ENCODE measurements at regions of chr20 and their contacts with region 1.

Region 1: DNA sequence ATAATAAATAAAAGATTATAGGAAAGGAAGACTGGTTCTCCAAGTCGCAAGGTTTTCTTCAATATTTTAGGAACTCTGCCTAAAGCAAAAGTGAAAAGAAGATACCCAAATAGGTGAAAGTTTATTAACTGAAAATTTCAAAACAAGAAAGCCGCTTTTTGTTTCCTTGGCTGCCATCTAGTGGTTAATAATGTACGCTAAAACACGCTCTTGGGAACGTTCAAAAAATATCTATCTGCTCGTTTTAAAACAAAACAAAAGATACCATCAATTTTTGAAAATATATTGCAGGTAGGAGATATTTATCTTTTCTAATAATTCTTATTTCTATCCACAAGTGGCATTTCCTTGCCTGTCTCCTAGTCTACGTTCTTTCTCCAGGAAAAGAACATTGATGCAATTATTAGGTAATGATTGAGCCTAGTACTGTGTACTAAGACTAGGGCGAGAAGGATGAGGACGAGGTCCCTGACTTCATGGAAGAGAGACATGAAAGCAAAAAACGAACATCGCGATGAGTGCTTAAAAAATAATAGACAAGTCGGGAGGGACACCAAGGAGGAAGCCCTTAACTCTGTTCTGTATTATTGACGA is 97.2 kb downstream of the SPTLC3 start:
- DNase-seq: no peak
- ATAC-seq: peak; percentile 38 to 68 (median 55)
- H3K4me3 ChIP-seq: no peak overlapping the region
- H3K27ac ChIP-seq: no peak overlapping the region
- H3K4me1 ChIP-seq: no peaks in the 10 kb centered on the region
- H3K27me3 ChIP-seq: no peaks in the 10 kb centered on the region
- CTCF ChIP-seq: peak; percentile 38 to 69 (median 63)

Region 2: GRCh38 chr20:12924126-12924525 is 181.8 kb before region 1 on chr20:
- intact Hi-C with region 1: loop called in 1 of 3 experiments (anchors 5 kb)
- DNase-seq: no peak
- ATAC-seq: no peak
- H3K4me3 ChIP-seq: no peak overlapping the region
- H3K27ac ChIP-seq: no peak overlapping the region
- H3K4me1 ChIP-seq: no peaks in the 10 kb centered on the region
- H3K27me3 ChIP-seq: no peaks in the 10 kb centered on the region
- CTCF ChIP-seq: no peak

Region 3: DNA sequence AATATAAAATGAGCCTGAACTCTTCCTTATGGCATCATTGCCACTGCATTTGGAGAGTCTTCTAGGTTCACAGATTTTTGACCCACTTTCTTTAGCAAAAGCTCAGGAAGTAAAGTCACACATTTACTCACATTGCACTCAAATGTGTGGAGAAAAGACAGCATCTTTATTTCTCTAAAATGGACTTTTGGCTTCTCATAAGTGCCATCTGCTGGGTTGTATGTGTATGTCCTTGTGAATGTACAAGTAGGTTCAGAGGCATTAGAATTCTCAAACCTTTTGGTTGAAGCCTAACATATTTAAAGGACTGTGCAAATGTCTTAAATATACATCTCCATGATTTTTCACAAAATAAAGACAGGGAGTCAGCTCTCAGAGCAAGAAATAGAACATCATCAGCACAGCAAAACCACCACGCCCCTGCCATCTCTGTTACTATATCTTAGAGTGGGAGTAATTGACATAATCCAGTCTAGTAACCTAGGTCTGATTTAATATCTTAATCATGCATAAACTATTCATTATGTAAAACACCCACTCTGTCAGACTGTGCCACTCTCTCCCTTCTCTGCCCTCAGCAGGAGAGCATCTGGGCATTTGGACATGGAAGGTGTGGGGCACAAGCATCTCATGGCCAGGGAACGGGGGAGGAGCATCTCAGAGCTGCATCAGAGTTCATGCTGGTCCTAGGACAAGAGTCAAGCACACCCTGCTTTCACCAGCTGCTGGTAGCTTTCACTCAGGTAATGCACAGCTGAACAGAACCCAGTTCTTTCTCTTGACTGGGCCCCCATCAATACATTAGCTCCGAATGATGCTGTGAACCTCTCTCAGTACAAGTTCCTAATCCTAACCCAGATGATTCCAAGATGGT is 139.3 kb before region 1 on chr20:
- intact Hi-C with region 1: loop called in 2 of 3 experiments (anchors 5 kb)
- DNase-seq: no peak
- ATAC-seq: peak in 3 of 4 donors; percentile 33 to 56 (median 42)
- H3K4me3 ChIP-seq: no peak overlapping the region
- H3K27ac ChIP-seq: no peak overlapping the region
- H3K4me1 ChIP-seq: no peaks in the 10 kb centered on the region
- H3K27me3 ChIP-seq: no peaks in the 10 kb centered on the region
- CTCF ChIP-seq: no peak